Activated CD8-positive, alpha-beta T cell treated with anti-CD3 and anti-CD28 coated beads, Interleukin-2, amount 10 ng/mL, durations not matched to agents 7 days and 5 days (primary cell): ENCODE measurements at regions of chr5 and their contacts with region 1.

Region 1: GRCh38 chr5:179821581-179822432 is 1.1 kb downstream of the SQSTM1 start:
- DNase-seq: peak; percentile 91
- ATAC-seq: peak; percentile 73
- H3K4me3 Mint-ChIP-seq: peak overlapping the region; percentile 91
- H3K27ac Mint-ChIP-seq: peak overlapping the region; percentile 97
- H3K4me1 Mint-ChIP-seq: peaks cover 56% of the 10 kb centered on the region
- H3K27me3 Mint-ChIP-seq: no peaks in the 10 kb centered on the region

Region 2: DNA sequence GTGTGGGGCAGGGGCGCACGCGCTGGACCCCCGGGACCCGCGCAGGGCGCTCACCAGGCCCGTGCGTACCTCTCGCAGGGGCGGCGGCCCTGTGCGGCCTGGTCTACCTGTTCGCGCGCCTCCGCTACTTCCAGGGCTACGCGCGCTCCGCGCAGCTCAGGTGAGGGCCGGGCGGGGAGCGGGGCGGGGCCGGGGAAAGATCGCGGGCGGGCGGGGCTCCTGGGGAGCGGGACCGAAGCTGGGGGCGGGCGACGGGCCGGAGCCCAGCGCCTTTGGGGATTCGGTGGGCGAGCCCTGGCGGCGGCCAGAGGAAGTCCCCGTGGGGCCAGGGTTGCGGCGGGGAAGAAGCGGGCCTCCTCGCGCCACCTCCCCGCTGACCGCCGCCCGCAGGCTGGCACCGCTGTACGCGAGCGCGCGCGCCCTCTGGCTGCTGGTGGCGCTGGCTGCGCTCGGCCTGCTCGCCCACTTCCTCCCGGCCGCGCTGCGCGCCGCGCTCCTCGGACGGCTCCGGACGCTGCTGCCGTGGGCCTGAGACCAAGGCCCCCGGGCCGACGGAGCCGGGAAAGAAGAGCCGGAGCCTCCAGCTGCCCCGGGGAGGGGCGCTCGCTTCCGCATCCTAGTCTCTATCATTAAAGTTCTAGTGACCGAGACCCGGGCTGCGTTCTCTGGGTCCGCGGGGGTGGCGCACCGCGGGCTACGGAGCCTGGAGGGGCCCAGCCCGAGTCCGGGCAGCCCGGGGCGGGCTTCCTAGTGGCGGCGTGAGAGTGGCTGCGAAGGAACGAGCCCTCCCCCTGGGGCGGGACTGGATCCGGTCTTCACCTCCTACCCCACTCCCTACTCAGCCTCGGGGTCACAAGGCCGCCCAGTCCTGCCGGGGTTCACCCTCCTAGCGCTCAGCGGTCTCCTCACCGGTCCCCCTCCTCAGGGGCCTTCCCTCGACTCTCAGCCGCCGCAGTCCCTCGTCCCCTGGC is 25.7 kb before region 1 on chr5:
- CTCF ChIA-PET with region 1: interaction called, 18 read pairs
- POLR2A ChIA-PET with region 1: interaction called, 3 read pairs
- DNase-seq: peak; percentile 72
- ATAC-seq: peak; percentile 71
- H3K4me3 Mint-ChIP-seq: peak overlapping the region; percentile 36
- H3K27ac Mint-ChIP-seq: peak overlapping the region; percentile 46
- H3K4me1 Mint-ChIP-seq: peaks cover 36% of the 10 kb centered on the region
- H3K27me3 Mint-ChIP-seq: no peaks in the 10 kb centered on the region